Posterior vena cava (tissue), 2 donors: ENCODE measurements at regions of chr22 and their contacts with region 1.

Region 1: GRCh38 chr22:21025266-21025665 is 7.1 kb downstream of the SLC7A4 start:
- DNase-seq: no peak

Region 2: GRCh38 chr22:20354238-20354975 is 670.9 kb before region 1 on chr22:
- intact Hi-C with region 1: no loop called
- DNase-seq: no peak

Region 3: DNA sequence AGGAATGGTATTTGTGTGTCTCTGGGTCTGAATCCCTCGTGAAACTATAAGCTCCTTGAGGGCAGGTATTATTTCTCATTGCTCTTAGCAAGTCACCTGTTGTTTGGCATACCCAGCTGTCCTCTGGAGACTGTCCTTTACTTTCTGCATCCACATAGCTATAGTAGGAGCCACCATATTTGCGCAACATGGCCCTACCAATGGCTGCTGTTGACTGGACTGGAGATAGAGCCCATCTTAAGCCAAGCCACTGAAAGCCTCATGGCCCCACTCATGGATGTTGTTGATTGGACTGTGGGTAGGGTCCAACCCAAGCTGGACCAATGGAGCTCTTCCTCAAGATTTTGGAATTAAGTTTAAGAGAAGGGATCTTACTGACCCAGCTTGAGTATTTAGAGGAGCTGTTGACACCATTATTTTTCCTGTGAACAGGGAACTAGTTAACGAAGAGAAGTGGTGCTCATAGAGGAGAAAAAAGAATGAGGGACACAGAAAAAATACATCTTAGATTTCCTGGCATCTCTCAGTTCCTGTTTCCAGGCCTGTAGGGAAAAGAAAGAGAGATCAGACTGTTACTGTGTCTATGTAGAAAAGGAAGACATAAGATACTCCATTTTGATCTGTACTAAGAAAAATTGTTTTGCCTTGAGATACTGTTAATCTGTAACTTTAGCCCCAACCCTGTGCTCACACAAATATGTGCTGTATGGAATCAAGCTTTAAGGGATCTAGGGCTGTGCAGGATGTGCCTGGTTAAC is 67.7 kb after region 1 on chr22:
- intact Hi-C with region 1: loop called in 1 of 2 experiments (anchors 1 kb)
- DNase-seq: no peak